ENCODE measurements at regions of chr11 and their contacts with region 1.

Region 1: GRCh38 chr11:74255741-74256369 is 55.6 kb downstream of the P4HA3 start:
- DNase-seq: peak; percentile 25
- H3K4me3 Mint-ChIP-seq: no peak overlapping the region
- H3K27ac Mint-ChIP-seq: no peak overlapping the region
- H3K4me1 Mint-ChIP-seq: no peaks in the 10 kb centered on the region
- H3K27me3 Mint-ChIP-seq: no peaks in the 10 kb centered on the region

Region 2: GRCh38 chr11:74269161-74269811 is 13.4 kb after region 1 on chr11:
- intact Hi-C with region 1: no loop called
- DNase-seq: no peak
- H3K4me3 Mint-ChIP-seq: no peak overlapping the region
- H3K27ac Mint-ChIP-seq: no peak overlapping the region
- H3K4me1 Mint-ChIP-seq: peaks cover 11% of the 10 kb centered on the region
- H3K27me3 Mint-ChIP-seq: peaks cover 22% of the 10 kb centered on the region

Region 3: DNA sequence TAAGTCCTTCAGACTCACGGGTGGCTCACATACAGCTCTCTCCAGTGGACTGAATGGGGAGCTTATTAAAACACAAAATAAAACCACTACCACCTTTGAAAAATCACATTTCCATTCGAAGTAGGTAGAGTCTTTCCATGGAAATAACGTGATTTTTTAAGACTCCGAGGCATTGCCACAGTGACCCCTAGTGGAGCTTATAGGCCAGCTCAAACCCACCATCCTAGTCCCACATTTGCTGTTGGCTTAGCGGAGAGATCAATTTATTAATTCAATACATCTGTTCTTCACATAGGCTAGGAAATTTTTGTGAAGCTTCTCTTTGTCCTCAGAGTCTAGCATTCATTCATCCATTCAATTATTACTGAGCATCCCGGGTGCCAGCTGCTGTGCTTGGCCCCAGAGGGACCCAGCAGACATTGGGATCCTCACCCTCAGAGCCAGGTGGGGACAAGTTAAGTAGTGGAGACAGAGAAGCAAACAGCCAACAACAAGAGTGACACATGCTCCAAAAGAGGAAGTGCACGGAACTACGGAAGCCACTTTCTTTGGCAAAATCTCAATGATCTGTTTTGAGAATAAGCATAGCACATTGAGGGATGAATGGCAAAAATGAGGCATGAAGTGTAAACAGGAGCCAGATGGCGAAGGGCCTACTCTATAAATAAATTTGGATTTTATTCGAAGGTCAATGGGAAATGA is 65.8 kb after region 1 on chr11:
- intact Hi-C with region 1: loop called (anchors 2 kb)
- DNase-seq: no peak
- H3K4me3 Mint-ChIP-seq: no peak overlapping the region
- H3K27ac Mint-ChIP-seq: no peak overlapping the region
- H3K4me1 Mint-ChIP-seq: no peaks in the 10 kb centered on the region
- H3K27me3 Mint-ChIP-seq: peaks cover 16% of the 10 kb centered on the region